Naive thymus-derived CD4-positive, alpha-beta T cell (primary cell): ENCODE measurements at regions of chr3 and their contacts with region 1.

Region 1: DNA sequence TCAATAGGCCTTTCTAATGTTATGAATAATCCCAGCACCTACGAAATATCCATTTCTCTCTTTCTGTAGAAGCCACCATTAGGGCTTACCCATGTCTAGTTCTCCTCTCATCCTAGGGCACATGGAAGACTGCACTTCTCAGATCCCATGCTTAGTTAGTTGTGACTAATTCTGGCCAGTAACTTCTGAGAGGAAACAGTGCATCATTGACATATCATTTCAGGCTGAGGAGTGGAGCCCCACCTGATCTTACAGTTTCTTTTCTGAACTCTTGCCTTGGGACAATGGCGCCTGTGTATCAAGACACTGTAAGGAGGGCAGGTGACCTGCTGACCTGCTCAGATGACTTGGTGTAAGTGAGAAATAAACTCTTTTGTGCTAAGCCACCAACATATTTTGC is 39.4 kb upstream of the TBL1XR1 start:
- DNase-seq: no peak
- ATAC-seq: no peak
- H3K4me3 ChIP-seq: no peak overlapping the region
- H3K4me3 Mint-ChIP-seq: no peak overlapping the region
- H3K27ac ChIP-seq: no peak overlapping the region
- H3K27ac Mint-ChIP-seq: peak overlapping the region in 1 of 9 donors; percentile 12
- H3K4me1 ChIP-seq: peaks cover 0 to 3% of the 10 kb centered on the region in 2 donors
- H3K4me1 Mint-ChIP-seq: peaks cover 0 to 7% (median 5%) of the 10 kb centered on the region in 7 donors
- H3K27me3 ChIP-seq: no peaks in the 10 kb centered on the region
- H3K27me3 Mint-ChIP-seq: no peaks in the 10 kb centered on the region

Region 2: GRCh38 chr3:177220136-177220974 is 16.3 kb before region 1 on chr3:
- CTCF ChIA-PET with region 1: interaction called, 3 read pairs
- POLR2A ChIA-PET with region 1: no interaction called
- intact Hi-C with region 1: loop called in 1 of 2 experiments (anchors 2 kb)
- DNase-seq: no peak
- ATAC-seq: no peak
- H3K4me3 ChIP-seq: no peak overlapping the region
- H3K4me3 Mint-ChIP-seq: peak overlapping the region in 1 of 10 donors; percentile 5
- H3K27ac ChIP-seq: no peak overlapping the region
- H3K27ac Mint-ChIP-seq: peak overlapping the region in 6 of 9 donors; percentile 6 to 68 (median 40)
- H3K4me1 ChIP-seq: peaks cover 0 to 20% of the 10 kb centered on the region in 2 donors
- H3K4me1 Mint-ChIP-seq: peaks cover 17 to 41% (median 32%) of the 10 kb centered on the region in 7 donors
- H3K27me3 ChIP-seq: no peaks in the 10 kb centered on the region
- H3K27me3 Mint-ChIP-seq: no peaks in the 10 kb centered on the region